Psoas muscle (tissue), 8 donors: ENCODE measurements at regions of chr5 and their contacts with region 1.

Region 1: GRCh38 chr5:81506900-81507588 is 113.1 kb upstream of the ACOT12 start:
- DNase-seq: no peak
- ATAC-seq: peak; percentile 95 to 99 (median 99)
- H3K4me3 ChIP-seq: no peak overlapping the region
- H3K27ac ChIP-seq: peak overlapping the region; percentile 7
- H3K4me1 ChIP-seq: peaks cover 8% of the 10 kb centered on the region
- H3K27me3 ChIP-seq: no peaks in the 10 kb centered on the region
- CTCF ChIP-seq: peak; percentile 91

Region 2: DNA sequence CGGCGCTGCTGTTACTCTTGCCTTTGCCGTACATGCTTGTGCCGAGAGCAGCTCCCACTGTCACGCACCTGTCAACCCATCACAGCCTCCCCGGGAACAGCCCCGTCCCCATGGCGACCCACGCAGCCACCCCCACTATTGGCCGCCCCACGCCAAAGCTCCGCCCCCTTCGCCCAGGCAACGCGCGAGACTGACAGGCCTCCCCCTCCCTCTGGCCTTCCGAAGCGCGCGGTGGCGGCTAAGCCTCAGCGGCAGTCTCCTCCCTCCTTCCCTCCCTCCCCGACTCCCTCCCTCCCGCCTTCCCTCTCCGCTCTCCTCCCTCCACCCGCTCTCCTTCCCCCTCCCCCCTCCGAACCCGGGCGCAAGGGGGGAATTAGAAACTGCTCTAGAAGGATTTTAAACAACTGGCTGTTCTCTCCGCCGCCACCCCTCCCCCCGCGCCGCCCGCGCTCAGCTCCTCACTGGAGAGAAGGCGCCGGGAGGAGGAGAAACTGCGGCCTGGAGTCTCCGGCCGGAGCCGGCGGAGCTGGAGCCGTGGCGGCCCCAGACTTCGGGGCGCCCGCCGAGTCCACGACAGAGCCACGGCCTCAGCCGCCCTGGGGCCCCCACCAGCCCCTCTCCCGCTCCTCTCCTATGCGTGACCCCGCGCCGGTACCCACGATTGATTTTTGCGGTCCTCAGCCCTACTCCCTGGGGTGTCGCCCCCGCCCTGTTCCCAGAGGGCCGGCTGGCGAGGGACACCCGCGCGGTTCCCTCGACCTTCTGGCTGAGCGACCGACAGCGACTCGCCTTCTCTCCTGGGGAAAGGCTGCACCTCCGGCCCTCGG is 244.2 kb after region 1 on chr5 and contains the start of gene SSBP2:
- intact Hi-C with region 1: loop called (anchors 2 to 5 kb)
- DNase-seq: peak; percentile 100
- ATAC-seq: peak; percentile 90 to 95 (median 93)
- H3K4me3 ChIP-seq: peak within 1 kb of the TSS; percentile 86
- H3K27ac ChIP-seq: peak within 1 kb of the TSS; percentile 95
- H3K4me1 ChIP-seq: peaks cover 48% of the 10 kb centered on the region
- H3K27me3 ChIP-seq: no peaks in the 10 kb centered on the region
- CTCF ChIP-seq: no peak
- total RNA-seq, gene SSBP2: 25.3 to 42.6 (median 34.6) TPM

Region 3: GRCh38 chr5:81851481-81852178 is 344.6 kb after region 1 on chr5:
- intact Hi-C with region 1: loop called (anchors 5 kb)
- DNase-seq: peak; percentile 96 to 98
- ATAC-seq: peak; percentile 85 to 88 (median 86)
- H3K4me3 ChIP-seq: peak overlapping the region; percentile 71
- H3K27ac ChIP-seq: peak overlapping the region; percentile 95
- H3K4me1 ChIP-seq: peaks cover 58% of the 10 kb centered on the region
- H3K27me3 ChIP-seq: no peaks in the 10 kb centered on the region
- CTCF ChIP-seq: no peak

Region 4: GRCh38 chr5:81884871-81885270 is 377.8 kb after region 1 on chr5:
- intact Hi-C with region 1: loop called in 1 of 2 experiments (anchors 10 kb)
- DNase-seq: no peak
- ATAC-seq: peak; percentile 36 to 90 (median 71)
- H3K4me3 ChIP-seq: no peak overlapping the region
- H3K27ac ChIP-seq: no peak overlapping the region
- H3K4me1 ChIP-seq: no peaks in the 10 kb centered on the region
- H3K27me3 ChIP-seq: no peaks in the 10 kb centered on the region
- CTCF ChIP-seq: peak; percentile 33

Region 5: DNA sequence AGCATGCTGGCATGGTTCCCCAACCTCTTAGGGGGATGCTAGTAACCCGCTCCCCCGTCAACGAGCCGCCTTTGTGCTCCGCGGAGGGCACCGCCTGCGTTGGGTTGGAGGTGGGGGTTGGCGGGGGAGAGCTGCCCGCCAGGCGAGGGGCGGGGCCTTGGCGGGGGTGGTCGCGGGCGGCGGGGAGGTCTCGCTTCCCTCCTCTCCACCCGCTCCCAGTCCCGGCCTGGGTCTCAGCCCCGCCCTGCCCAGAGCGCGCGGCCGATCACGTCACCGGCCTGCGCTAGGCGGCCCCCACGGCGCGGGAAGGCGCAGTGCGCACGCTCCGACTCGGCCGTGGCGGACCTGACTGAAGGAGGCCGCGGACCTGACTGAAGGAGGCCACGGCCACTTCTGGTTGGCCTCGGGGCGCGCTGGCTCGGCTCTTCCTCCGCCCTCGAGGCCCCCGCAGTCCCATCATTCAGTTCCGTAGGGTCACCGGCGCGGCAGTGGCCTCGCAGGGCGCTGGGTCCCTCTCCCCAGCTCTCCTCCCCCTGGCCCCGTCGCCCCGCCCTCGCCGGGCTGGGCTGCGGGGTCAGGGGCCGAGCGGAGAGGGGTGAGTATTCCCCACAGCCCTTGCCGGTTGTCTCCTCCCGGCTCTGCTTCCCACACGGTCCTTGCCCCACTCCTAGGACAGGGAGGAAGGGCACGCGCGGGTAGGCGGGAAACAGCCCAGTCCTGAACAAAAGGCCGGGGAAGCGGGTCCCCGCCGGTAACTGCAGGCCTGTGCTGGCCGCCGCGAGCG is 464.9 kb after region 1 on chr5 and contains the start of gene ATG10:
- intact Hi-C with region 1: loop called (anchors 5 to 10 kb)
- DNase-seq: peak; percentile 92 to 95
- ATAC-seq: peak; percentile 97 to 99 (median 98)
- H3K4me3 ChIP-seq: peak within 1 kb of the TSS; percentile 80
- H3K27ac ChIP-seq: peak within 1 kb of the TSS; percentile 97
- H3K4me1 ChIP-seq: no peaks in the 10 kb centered on the region
- H3K27me3 ChIP-seq: no peaks in the 10 kb centered on the region
- CTCF ChIP-seq: no peak
- total RNA-seq, gene ATG10: 4.6 to 7.4 (median 6.2) TPM

Region 6: DNA sequence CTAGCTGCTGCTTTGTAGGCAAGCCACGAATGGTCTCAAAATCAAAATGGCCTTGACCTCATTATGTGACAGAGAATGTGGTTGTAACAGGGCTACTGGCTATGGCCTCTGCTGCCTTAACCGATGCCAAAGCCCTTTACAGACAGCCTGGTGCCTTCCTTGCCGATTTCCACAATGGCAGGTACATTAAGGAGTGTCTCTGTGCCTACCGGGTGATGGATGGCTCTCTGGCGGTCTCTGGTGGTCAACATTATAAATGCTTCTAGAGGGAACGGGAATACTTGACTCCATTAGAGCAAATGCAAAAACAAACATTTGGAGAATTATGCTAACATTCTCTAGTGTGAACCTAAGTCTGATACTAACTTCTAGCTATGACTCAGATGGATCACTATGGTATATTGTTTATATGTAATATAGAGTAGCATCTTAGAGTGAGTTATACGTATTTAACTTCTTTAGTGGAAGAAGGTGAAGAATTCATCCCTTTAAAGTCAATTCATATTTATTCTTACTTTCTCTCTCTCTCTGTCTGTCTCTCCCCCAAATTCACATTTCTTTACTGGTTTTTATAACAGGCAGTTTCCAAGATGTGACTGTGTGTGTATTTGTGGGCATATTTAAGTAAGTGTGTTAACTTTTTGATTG is 718.6 kb after region 1 on chr5:
- intact Hi-C with region 1: loop called in 1 of 2 experiments (anchors 5 kb)
- DNase-seq: peak in 1 of 2 donors; percentile 60
- ATAC-seq: peak; percentile 69 to 93 (median 85)
- H3K4me3 ChIP-seq: no peak overlapping the region
- H3K27ac ChIP-seq: no peak overlapping the region
- H3K4me1 ChIP-seq: peaks cover 5% of the 10 kb centered on the region
- H3K27me3 ChIP-seq: no peaks in the 10 kb centered on the region
- CTCF ChIP-seq: peak; percentile 85